ENCODE measurements at regions of chr16 and their contacts with region 1.

Region 1: DNA sequence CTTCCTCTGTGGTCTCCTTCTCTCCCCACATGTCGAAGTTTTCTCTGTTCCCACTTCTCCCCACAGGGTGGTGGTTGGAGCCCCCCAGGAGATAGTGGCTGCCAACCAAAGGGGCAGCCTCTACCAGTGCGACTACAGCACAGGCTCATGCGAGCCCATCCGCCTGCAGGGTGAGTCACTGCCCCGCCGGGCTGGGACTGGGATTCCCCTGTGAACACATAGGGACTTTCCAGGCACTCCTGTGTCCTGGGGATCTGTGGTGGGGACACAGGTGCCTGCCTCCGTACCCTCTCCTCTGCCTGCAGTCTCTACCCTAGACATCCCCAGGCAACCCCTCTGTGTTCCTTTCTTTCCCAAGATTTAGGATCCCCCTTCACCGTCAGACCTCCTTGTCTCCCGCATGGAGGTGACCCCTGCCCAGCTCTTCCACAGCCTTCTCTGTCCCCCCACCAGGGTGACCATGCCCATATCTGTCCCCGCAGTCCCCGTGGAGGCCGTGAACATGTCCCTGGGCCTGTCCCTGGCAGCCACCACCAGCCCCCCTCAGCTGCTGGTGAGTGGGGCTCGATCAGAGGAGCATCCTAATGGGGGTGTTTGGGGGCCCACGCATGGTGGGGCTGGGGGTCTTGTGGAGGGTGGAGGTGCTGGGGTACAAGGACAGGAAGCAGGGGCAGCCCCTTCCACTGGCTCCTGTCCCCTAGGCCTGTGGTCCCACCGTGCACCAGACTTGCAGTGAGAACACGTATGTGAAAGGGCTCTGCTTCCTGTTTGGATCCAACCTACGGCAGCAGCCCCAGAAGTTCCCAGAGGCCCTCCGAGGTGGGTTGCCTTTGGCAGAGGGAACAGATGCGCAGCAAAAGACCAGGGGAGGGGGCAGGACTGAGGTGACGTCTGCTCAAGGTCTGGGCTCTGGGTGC is 5.8 kb downstream of the ITGAM start:
- DNase-seq: peak; percentile 91
- H3K4me3 Mint-ChIP-seq: peak overlapping the region; percentile 83
- H3K27ac Mint-ChIP-seq: peak overlapping the region; percentile 94
- H3K4me1 Mint-ChIP-seq: peaks cover 60% of the 10 kb centered on the region
- H3K27me3 Mint-ChIP-seq: no peaks in the 10 kb centered on the region

Region 2: GRCh38 chr16:30571695-30572600 is 693.6 kb before region 1 on chr16 and contains the start of gene ZNF688:
- intact Hi-C with region 1: no loop called
- DNase-seq: peak; percentile 98
- H3K4me3 Mint-ChIP-seq: peak within 1 kb of the TSS; percentile 97
- H3K27ac Mint-ChIP-seq: peak within 1 kb of the TSS; percentile 91
- H3K4me1 Mint-ChIP-seq: peaks cover 49% of the 10 kb centered on the region
- H3K27me3 Mint-ChIP-seq: no peaks in the 10 kb centered on the region
- total RNA-seq, gene ZNF688: 6.6 and 8.0 TPM in 2 replicates

Region 3: DNA sequence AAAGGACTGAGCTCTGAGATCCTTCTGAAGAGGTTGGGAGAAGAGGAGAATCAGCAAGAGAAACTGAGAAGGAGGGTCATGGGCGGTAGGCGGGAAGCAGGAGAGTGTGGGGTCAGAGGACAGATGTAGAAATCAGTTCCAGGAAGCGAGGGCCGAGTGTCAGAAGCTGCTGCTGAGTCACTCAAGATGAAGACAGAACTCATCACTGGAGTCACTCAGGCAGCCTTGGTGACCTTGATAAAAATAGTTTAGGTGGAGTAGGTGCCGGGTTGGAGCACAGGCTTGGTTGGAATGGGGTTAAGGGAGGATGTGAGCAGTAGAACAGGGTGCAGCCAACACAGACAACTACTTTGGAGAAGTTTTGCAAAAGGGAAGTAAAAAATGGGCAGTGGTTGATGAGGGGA is 11.9 kb before region 1 on chr16:
- intact Hi-C with region 1: loop called (anchors 1 kb)
- DNase-seq: peak; percentile 84
- H3K4me3 Mint-ChIP-seq: peak overlapping the region; percentile 84
- H3K27ac Mint-ChIP-seq: peak overlapping the region; percentile 98
- H3K4me1 Mint-ChIP-seq: peaks cover 47% of the 10 kb centered on the region
- H3K27me3 Mint-ChIP-seq: no peaks in the 10 kb centered on the region

Region 4: GRCh38 chr16:31354394-31355291 is 89.1 kb after region 1 on chr16 and contains the start of gene ITGAX:
- intact Hi-C with region 1: loop called (anchors 10 kb)
- DNase-seq: peak; percentile 92
- H3K4me3 Mint-ChIP-seq: peak within 1 kb of the TSS; percentile 91
- H3K27ac Mint-ChIP-seq: peak within 1 kb of the TSS; percentile 95
- H3K4me1 Mint-ChIP-seq: peaks cover 56% of the 10 kb centered on the region
- H3K27me3 Mint-ChIP-seq: no peaks in the 10 kb centered on the region
- total RNA-seq, gene ITGAX: 44.3 and 45.9 TPM in 2 replicates

Region 5: DNA sequence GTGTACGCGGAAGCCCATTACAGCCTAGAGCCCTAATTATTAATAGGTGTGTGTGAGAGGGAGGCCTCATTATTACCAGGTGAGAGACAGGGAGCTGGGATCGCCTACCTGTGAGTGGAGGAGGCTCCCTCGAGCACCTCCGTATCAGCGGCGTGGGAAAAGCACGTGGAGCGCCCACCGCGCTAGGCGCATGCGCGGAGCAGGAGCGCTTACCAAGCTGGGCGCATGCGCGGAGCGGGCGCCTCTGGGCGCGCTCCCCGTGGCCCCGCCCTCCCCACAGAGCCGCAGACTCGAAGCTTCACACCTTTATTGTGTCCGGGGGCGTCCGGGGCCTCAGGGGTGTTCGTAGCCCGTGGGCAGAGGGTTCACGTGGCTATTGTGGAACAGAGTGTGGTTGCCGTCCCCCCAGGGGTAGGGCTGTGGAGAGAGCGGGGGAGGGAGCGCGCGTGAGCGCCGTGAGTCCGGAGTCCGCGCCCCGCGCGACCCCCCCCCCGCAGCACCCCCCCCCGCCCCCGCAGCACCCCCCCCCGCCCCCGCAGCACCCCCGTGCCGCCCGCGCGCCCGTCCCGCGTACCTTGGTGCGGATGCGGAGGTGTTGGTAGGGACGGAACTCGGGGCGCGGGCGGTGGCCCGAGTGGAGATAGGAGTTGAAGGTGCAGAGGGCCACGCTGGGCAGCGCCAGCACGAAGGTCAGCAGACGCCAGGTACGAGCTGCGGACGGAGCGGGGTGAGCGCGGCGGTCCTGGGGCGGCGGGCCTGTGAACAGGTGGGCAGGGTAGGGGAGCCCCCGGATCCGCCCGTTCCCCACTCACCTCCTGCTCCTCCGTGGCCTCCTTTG is 162.1 kb after region 1 on chr16:
- intact Hi-C with region 1: loop called (anchors 10 kb)
- DNase-seq: peak; percentile 88
- H3K4me3 Mint-ChIP-seq: peak overlapping the region; percentile 17
- H3K27ac Mint-ChIP-seq: no peak overlapping the region
- H3K4me1 Mint-ChIP-seq: peaks cover 19% of the 10 kb centered on the region
- H3K27me3 Mint-ChIP-seq: no peaks in the 10 kb centered on the region

Region 6: GRCh38 chr16:31713071-31713944 is 447.7 kb after region 1 on chr16:
- intact Hi-C with region 1: loop called (anchors 10 kb)
- DNase-seq: peak; percentile 97
- H3K4me3 Mint-ChIP-seq: peak overlapping the region; percentile 99
- H3K27ac Mint-ChIP-seq: peak overlapping the region; percentile 99
- H3K4me1 Mint-ChIP-seq: peaks cover 30% of the 10 kb centered on the region
- H3K27me3 Mint-ChIP-seq: no peaks in the 10 kb centered on the region

Region 7: GRCh38 chr16:31868691-31869167 is 603.1 kb after region 1 on chr16:
- intact Hi-C with region 1: loop called (anchors 5 kb)
- DNase-seq: peak; percentile 94
- H3K4me3 Mint-ChIP-seq: peak overlapping the region; percentile 75
- H3K27ac Mint-ChIP-seq: peak overlapping the region; percentile 95
- H3K4me1 Mint-ChIP-seq: peaks cover 53% of the 10 kb centered on the region
- H3K27me3 Mint-ChIP-seq: peaks cover 5% of the 10 kb centered on the region